ENCODE measurements at regions of chr10 and their contacts with region 1.

Region 1: DNA sequence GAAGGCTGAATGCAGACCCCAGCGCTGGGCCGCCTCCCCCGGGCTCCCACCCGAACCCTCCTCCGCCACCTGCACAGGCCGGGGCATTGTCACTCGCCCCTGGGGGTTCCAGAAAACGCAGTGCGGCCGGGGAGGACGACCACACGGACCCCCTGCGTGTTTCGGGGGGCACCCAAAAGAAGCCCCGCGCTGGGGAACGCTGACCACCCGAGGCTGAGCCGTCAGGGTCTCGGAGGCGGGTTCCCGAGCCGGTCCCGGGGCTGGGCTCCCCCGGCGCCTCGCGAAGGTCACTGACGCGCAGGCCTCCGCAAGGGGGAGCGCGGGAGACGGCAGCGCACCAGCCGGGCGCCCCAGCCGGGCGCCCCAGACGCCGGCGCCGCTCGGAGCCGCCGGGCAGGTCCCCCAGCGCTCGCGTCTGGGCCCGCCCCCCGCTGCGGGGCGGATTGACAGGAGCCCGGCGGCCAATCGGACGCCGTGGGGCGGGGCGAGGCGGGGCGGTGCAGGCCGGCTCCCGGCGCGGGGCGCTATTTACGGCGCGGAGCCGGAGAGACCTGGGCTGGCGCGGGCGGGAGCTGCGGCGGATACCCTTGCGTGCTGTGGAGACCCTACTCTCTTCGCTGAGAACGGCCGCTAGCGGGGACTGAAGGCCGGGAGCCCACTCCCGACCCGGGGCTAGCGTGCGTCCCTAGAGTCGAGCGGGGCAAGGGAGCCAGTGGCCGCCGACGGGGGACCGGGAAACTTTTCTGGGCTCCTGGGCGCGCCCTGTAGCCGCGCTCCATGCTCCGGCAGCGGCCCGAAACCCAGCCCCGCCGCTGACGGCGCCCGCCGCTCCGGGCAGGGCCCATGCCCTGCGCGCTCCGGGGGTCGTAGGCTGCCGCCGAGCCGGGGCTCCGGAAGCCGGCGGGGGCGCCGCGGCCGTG is at the start of gene BAMBI:
- DNase-seq: peak; percentile 92 to 95
- ATAC-seq: peak; percentile 98 to 99 (median 99)
- H3K4me3 ChIP-seq: peak within 1 kb of the TSS; percentile 85
- H3K27ac ChIP-seq: peak within 1 kb of the TSS; percentile 62
- H3K4me1 ChIP-seq: peaks cover 12% of the 10 kb centered on the region
- H3K27me3 ChIP-seq: peaks cover 0 to 12% (median 0%) of the 10 kb centered on the region in 3 donors
- CTCF ChIP-seq: peak; percentile 53
- total RNA-seq, gene BAMBI: 0.89 to 2.9 (median 1.3) TPM

Region 2: DNA sequence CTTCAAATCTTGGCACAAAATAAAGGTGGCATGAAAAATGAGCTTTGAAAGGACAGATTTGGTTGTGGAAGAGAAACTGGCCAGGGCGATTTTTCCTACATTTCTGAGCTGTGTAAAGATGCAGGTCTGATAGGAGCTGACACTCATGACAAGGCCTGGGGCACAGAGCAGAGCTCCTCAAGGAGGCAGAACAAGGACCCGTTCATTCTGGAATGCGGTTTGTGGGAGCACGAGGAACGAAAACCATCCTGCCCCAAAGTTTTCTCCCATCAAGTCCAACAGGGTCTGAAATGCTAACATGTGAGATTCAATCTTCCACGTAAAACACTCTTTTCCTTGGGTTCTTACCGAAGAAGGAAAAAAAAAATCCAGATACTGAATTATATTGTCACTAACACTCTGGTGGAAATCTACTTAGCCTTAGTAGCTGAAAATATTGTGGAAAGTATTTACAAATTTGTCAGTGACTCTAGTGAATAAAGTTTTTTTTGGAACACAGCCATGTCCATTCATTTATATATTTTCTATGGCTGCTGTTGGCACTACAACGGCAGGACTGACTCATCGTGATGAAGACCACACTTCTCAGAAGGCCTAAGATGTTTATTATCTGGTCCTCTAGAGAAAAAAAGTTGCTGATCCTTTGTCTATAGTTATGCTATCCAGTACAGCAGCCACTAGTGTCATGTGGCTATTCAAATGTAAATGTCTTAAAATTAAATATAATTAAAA is 215.8 kb after region 1 on chr10:
- intact Hi-C with region 1: loop called in 1 of 2 experiments (anchors 10 kb)
- DNase-seq: no peak
- ATAC-seq: no peak
- H3K4me3 ChIP-seq: no peak overlapping the region
- H3K27ac ChIP-seq: no peak overlapping the region
- H3K4me1 ChIP-seq: no peaks in the 10 kb centered on the region
- H3K27me3 ChIP-seq: no peaks in the 10 kb centered on the region
- CTCF ChIP-seq: no peak

Region 3: GRCh38 chr10:28991326-28992270 is 314.4 kb after region 1 on chr10:
- intact Hi-C with region 1: loop called in 1 of 2 experiments (anchors 5 kb)
- DNase-seq: peak in 1 of 2 donors; percentile 29
- ATAC-seq: peak; percentile 62 to 87 (median 70)
- H3K4me3 ChIP-seq: no peak overlapping the region
- H3K27ac ChIP-seq: no peak overlapping the region
- H3K4me1 ChIP-seq: no peaks in the 10 kb centered on the region
- H3K27me3 ChIP-seq: no peaks in the 10 kb centered on the region
- CTCF ChIP-seq: peak; percentile 73